ENCODE measurements at regions of chrX and their contacts with region 1.

Region 1: GRCh38 chrX:12946838-12947544 is 27.9 kb upstream of the TMSB4X start:
- DNase-seq: peak; percentile 45 to 87 (median 75)
- ATAC-seq: peak; percentile 28
- H3K4me3 ChIP-seq: no peak overlapping the region
- H3K4me3 Mint-ChIP-seq: peak overlapping the region; percentile 60
- H3K27ac ChIP-seq: peak overlapping the region; percentile 17 to 94
- H3K27ac Mint-ChIP-seq: peak overlapping the region; percentile 98
- H3K4me1 ChIP-seq: peaks cover 44% of the 10 kb centered on the region
- H3K4me1 Mint-ChIP-seq: peaks cover 58% of the 10 kb centered on the region
- H3K27me3 ChIP-seq: no peaks in the 10 kb centered on the region
- H3K27me3 Mint-ChIP-seq: no peaks in the 10 kb centered on the region
- CTCF ChIP-seq: peak; percentile 77

Region 2: GRCh38 chrX:12709047-12709446 is 237.9 kb before region 1 on chrX:
- CTCF ChIA-PET with region 1: no interaction called
- POLR2A ChIA-PET with region 1: no interaction called
- intact Hi-C with region 1: no loop called
- DNase-seq: no peak
- ATAC-seq: no peak
- H3K4me3 ChIP-seq: no peak overlapping the region
- H3K4me3 Mint-ChIP-seq: no peak overlapping the region
- H3K27ac ChIP-seq: no peak overlapping the region
- H3K27ac Mint-ChIP-seq: no peak overlapping the region
- H3K4me1 ChIP-seq: no peaks in the 10 kb centered on the region
- H3K4me1 Mint-ChIP-seq: no peaks in the 10 kb centered on the region
- H3K27me3 ChIP-seq: no peaks in the 10 kb centered on the region
- H3K27me3 Mint-ChIP-seq: no peaks in the 10 kb centered on the region
- CTCF ChIP-seq: no peak

Region 3: DNA sequence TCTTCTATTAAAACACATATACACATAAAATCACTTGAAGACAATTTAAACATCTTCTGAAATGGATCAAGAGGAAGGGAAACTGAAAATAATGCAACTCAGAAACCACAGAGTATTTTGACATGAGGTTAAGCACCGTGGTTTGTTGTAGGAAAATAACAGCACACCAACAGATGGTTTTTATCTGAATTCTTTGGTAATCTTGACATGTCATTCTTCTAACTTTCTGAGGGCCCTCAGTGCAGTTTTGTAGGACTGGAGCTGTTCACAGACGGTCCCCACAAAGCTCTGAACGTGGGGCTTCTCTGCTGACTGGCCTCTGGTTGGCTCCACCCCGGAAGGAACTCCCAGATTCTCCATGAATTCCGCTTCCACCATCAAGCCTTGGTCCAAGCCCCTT is 56.5 kb before region 1 on chrX:
- CTCF ChIA-PET with region 1: no interaction called
- POLR2A ChIA-PET with region 1: no interaction called
- intact Hi-C with region 1: no loop called
- DNase-seq: peak in 1 of 9 experiments; percentile 14
- ATAC-seq: no peak
- H3K4me3 ChIP-seq: no peak overlapping the region
- H3K4me3 Mint-ChIP-seq: no peak overlapping the region
- H3K27ac ChIP-seq: no peak overlapping the region
- H3K27ac Mint-ChIP-seq: no peak overlapping the region
- H3K4me1 ChIP-seq: peaks cover 3% of the 10 kb centered on the region
- H3K4me1 Mint-ChIP-seq: peaks cover 25% of the 10 kb centered on the region
- H3K27me3 ChIP-seq: no peaks in the 10 kb centered on the region
- H3K27me3 Mint-ChIP-seq: no peaks in the 10 kb centered on the region
- CTCF ChIP-seq: no peak

Region 4: DNA sequence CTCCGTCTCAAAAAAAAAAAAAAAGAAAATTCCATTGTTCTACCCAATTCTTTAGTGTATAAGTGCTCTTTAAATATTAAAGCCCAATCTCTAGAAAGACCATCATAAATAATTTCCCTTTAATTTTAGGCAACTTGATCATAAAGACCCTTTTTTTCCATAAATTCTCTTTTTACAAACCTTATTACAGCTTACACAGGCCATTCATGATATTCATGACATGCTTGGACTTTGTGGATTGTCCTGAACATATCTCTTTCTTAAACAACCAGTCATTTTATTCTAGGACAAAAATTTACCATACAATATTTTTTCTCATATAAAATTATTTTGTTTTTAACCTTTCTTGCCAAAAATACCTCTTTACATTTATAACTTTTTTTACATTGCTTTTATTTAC is 10.0 kb before region 1 on chrX:
- CTCF ChIA-PET with region 1: interaction called, 15 read pairs
- POLR2A ChIA-PET with region 1: no interaction called
- intact Hi-C with region 1: no loop called
- DNase-seq: no peak
- ATAC-seq: no peak
- H3K4me3 ChIP-seq: no peak overlapping the region
- H3K4me3 Mint-ChIP-seq: no peak overlapping the region
- H3K27ac ChIP-seq: no peak overlapping the region
- H3K27ac Mint-ChIP-seq: no peak overlapping the region
- H3K4me1 ChIP-seq: no peaks in the 10 kb centered on the region
- H3K4me1 Mint-ChIP-seq: no peaks in the 10 kb centered on the region
- H3K27me3 ChIP-seq: no peaks in the 10 kb centered on the region
- H3K27me3 Mint-ChIP-seq: no peaks in the 10 kb centered on the region
- CTCF ChIP-seq: no peak

Region 5: DNA sequence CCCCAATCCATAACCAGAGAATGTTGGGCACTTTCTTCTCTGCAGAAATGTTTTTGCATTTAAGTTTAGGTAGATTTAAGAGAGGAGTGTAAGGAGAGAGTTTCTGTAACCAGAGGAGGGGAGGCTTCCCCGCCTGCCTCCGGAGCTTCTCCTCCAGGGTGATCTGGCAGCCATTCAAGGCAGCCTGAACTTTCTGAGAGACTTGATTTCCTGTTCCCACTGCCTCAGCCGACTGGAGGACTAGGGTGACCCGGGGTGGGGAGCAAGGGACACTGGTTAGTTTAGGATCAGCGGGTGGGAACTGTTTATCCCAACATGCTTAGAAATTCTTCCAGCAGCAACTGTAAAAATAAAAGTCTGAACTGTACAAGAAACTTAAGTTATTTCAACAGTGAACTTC is 82.3 kb after region 1 on chrX:
- CTCF ChIA-PET with region 1: interaction called, 10 read pairs
- POLR2A ChIA-PET with region 1: no interaction called
- intact Hi-C with region 1: no loop called
- DNase-seq: peak in 5 of 9 experiments; percentile 18 to 50 (median 24)
- ATAC-seq: no peak
- H3K4me3 ChIP-seq: peak overlapping the region in 1 of 2 experiments; percentile 5
- H3K4me3 Mint-ChIP-seq: peak overlapping the region; percentile 54
- H3K27ac ChIP-seq: peak overlapping the region; percentile 30 to 56
- H3K27ac Mint-ChIP-seq: peak overlapping the region; percentile 96
- H3K4me1 ChIP-seq: peaks cover 69% of the 10 kb centered on the region
- H3K4me1 Mint-ChIP-seq: peaks cover 73% of the 10 kb centered on the region
- H3K27me3 ChIP-seq: no peaks in the 10 kb centered on the region
- H3K27me3 Mint-ChIP-seq: no peaks in the 10 kb centered on the region
- CTCF ChIP-seq: no peak

Region 6: GRCh38 chrX:13151828-13152510 is 205.0 kb after region 1 on chrX:
- CTCF ChIA-PET with region 1: interaction called, 4 read pairs
- POLR2A ChIA-PET with region 1: no interaction called
- intact Hi-C with region 1: loop called in 1 of 2 experiments (anchors 5 kb)
- DNase-seq: peak in 5 of 9 experiments; percentile 24 to 86 (median 40)
- ATAC-seq: peak; percentile 88
- H3K4me3 ChIP-seq: no peak overlapping the region
- H3K4me3 Mint-ChIP-seq: peak overlapping the region; percentile 55
- H3K27ac ChIP-seq: no peak overlapping the region
- H3K27ac Mint-ChIP-seq: peak overlapping the region; percentile 69
- H3K4me1 ChIP-seq: peaks cover 13% of the 10 kb centered on the region
- H3K4me1 Mint-ChIP-seq: peaks cover 23% of the 10 kb centered on the region
- H3K27me3 ChIP-seq: no peaks in the 10 kb centered on the region
- H3K27me3 Mint-ChIP-seq: no peaks in the 10 kb centered on the region
- CTCF ChIP-seq: no peak

Region 7: DNA sequence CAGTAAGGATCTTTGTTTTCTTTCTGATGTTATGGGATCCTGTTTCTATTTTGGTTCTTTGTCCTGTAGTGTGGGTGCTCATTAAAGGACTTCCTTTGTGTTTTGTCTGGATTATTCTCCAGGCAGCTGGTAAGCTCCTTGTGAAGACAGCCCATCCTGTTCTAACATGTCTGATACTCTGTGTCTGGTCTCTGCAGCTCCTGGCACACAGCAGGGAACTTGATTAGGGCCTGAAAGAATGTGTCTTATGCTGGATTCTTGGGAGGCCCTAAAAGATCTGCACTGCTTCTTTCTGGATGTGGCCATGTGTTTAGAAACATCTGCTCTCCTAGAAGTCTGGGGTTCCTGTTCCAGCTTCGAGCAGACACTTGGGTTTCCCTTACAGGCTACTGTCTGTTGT is 410.9 kb after region 1 on chrX:
- CTCF ChIA-PET with region 1: interaction called, 3 read pairs
- POLR2A ChIA-PET with region 1: no interaction called
- intact Hi-C with region 1: loop called in 1 of 2 experiments (anchors 2 kb)
- DNase-seq: no peak
- ATAC-seq: no peak
- H3K4me3 ChIP-seq: no peak overlapping the region
- H3K4me3 Mint-ChIP-seq: no peak overlapping the region
- H3K27ac ChIP-seq: no peak overlapping the region
- H3K27ac Mint-ChIP-seq: no peak overlapping the region
- H3K4me1 ChIP-seq: no peaks in the 10 kb centered on the region
- H3K4me1 Mint-ChIP-seq: peaks cover 3% of the 10 kb centered on the region
- H3K27me3 ChIP-seq: no peaks in the 10 kb centered on the region
- H3K27me3 Mint-ChIP-seq: no peaks in the 10 kb centered on the region
- CTCF ChIP-seq: no peak

Region 8: DNA sequence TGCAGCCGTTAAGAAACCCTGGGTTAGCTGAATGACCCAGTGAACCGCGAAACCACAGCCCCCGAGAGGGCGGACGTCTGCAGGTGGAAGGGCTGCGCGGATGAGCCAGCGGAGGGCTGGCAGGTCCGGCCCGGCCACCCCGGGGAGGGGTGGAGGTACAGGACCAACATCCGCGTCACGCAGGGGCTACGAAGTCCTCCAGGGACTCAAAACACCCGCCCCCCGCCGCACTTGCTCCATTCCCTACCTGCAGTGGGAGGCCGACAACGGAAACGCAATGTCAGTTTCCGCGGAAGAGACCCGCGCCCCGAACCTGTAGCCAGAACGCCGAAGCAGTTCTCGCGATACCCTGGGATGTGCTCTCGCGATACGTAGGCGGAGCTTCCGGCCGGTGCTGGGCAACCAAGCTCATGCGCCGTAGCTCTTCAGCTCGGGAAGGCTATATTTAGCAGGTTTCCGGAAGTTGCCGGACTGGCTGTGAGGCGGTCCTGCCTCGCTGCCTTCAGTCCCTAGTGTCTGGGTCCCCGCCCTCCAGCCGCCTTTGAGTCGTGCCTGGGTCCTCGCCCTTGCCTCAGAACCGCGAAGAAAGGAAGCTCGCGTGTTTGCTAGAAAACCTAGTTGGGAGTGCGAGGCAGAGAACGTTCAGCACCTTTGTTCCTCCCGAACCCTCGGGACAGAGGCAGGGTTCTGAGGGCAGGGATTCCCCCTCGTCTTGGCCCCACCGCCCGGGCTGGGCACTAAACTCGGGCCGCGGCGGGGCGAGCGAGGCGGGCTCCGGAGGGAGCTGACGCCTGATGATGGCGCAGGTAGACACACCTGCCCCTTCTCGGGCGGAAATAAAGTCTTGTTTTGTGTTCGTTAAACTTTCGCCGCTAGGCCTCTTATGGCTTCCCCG is 787.5 kb after region 1 on chrX and contains the starts of genes OFD1 and TRAPPC2:
- CTCF ChIA-PET with region 1: no interaction called
- POLR2A ChIA-PET with region 1: interaction called, 3 read pairs
- intact Hi-C with region 1: loop called in 1 of 2 experiments (anchors 5 kb)
- DNase-seq: peak; percentile 75 to 95 (median 90)
- ATAC-seq: peak; percentile 84
- H3K4me3 ChIP-seq: peak within 1 kb of the TSS; percentile 62 to 92
- H3K4me3 Mint-ChIP-seq: peak within 1 kb of the TSS; percentile 97
- H3K27ac ChIP-seq: peak within 1 kb of the TSS; percentile 93 to 99
- H3K27ac Mint-ChIP-seq: peak within 1 kb of the TSS; percentile 99
- H3K4me1 ChIP-seq: peaks cover 46% of the 10 kb centered on the region
- H3K4me1 Mint-ChIP-seq: peaks cover 54% of the 10 kb centered on the region
- H3K27me3 ChIP-seq: no peaks in the 10 kb centered on the region
- H3K27me3 Mint-ChIP-seq: no peaks in the 10 kb centered on the region
- CTCF ChIP-seq: no peak
- total RNA-seq, gene OFD1: 49.2 to 56.7 TPM
- total RNA-seq, gene TRAPPC2: 20.5 to 24.6 TPM